Stomach (tissue), 19 donors: ENCODE measurements at regions of chr5 and their contacts with region 1.

Region 1: GRCh38 chr5:143403593-143404415 is at the start of gene NR3C1:
- DNase-seq: peak; percentile 88 to 96
- H3K4me3 ChIP-seq: peak within 1 kb of the TSS; percentile 68 to 92 (median 78)
- H3K27ac ChIP-seq: peak within 1 kb of the TSS; percentile 92 to 100 (median 99)
- H3K4me1 ChIP-seq: peaks cover 3 to 32% (median 25%) of the 10 kb centered on the region in 4 donors
- H3K27me3 ChIP-seq: no peaks in the 10 kb centered on the region
- CTCF ChIP-seq: peak in 3 of 7 experiments; percentile 56 to 87 (median 66)
- EP300 ChIP-seq: no peak
- POLR2A ChIP-seq: no peak
- total RNA-seq, gene NR3C1: 6.4 to 82.8 (median 52.6) TPM

Region 2: GRCh38 chr5:143016777-143017516 is 386.9 kb before region 1 on chr5:
- intact Hi-C with region 1: loop called (anchors 10 kb)
- DNase-seq: peak in 1 of 2 donors; percentile 68
- H3K4me3 ChIP-seq: no peak overlapping the region
- H3K27ac ChIP-seq: no peak overlapping the region
- H3K4me1 ChIP-seq: peaks cover 0 to 18% (median 2%) of the 10 kb centered on the region in 4 donors
- H3K27me3 ChIP-seq: no peaks in the 10 kb centered on the region
- CTCF ChIP-seq: peak in 3 of 7 experiments; percentile 30 to 37 (median 32)
- EP300 ChIP-seq: no peak
- POLR2A ChIP-seq: no peak